Panc1 (cell line): ENCODE measurements at regions of chr5 and their contacts with region 1.

Region 1: GRCh38 chr5:146119515-146119914 is 14.1 kb upstream of the PLAC8L1 start:
- DNase-seq: no peak
- ATAC-seq: no peak
- H3K4me3 ChIP-seq: no peak overlapping the region
- H3K27ac ChIP-seq: no peak overlapping the region
- H3K4me1 ChIP-seq: no peaks in the 10 kb centered on the region
- H3K27me3 ChIP-seq: no peaks in the 10 kb centered on the region
- CTCF ChIP-seq: no peak

Region 2: DNA sequence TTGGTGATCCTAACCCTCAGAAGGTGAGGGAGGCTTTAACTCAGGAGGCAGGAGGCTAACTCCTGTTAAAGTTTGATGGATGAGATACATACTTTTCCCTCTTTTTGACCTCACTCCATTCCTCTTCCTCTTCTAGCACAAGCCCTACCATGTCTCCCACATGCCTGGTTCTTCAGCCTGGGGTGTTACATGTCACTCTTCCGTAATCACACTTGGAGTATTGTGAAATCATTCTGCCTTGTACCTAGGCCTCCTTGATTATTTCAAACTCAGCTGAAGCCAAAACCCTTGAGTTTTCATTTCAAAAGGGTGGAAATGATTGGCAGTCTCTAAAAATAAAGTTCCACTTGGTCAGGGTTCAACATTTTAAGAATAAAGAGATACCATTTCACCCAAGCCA is 15.9 kb before region 1 on chr5:
- CTCF ChIA-PET with region 1: no interaction called
- POLR2A ChIA-PET with region 1: no interaction called
- in situ Hi-C with region 1: no loop called
- intact Hi-C with region 1: no loop called
- DNase-seq: no peak
- ATAC-seq: no peak
- H3K4me3 ChIP-seq: no peak overlapping the region
- H3K27ac ChIP-seq: no peak overlapping the region
- H3K4me1 ChIP-seq: no peaks in the 10 kb centered on the region
- H3K27me3 ChIP-seq: no peaks in the 10 kb centered on the region
- CTCF ChIP-seq: no peak

Region 3: GRCh38 chr5:146510559-146511125 is 391.1 kb after region 1 on chr5:
- CTCF ChIA-PET with region 1: no interaction called
- POLR2A ChIA-PET with region 1: interaction called, 10 read pairs
- in situ Hi-C with region 1: no loop called
- intact Hi-C with region 1: no loop called
- DNase-seq: no peak
- ATAC-seq: no peak
- H3K4me3 ChIP-seq: no peak overlapping the region
- H3K27ac ChIP-seq: no peak overlapping the region
- H3K4me1 ChIP-seq: no peaks in the 10 kb centered on the region
- H3K27me3 ChIP-seq: no peaks in the 10 kb centered on the region
- CTCF ChIP-seq: no peak